H1 (cell line): ENCODE measurements at regions of chr9 and their contacts with region 1.

Region 1: DNA sequence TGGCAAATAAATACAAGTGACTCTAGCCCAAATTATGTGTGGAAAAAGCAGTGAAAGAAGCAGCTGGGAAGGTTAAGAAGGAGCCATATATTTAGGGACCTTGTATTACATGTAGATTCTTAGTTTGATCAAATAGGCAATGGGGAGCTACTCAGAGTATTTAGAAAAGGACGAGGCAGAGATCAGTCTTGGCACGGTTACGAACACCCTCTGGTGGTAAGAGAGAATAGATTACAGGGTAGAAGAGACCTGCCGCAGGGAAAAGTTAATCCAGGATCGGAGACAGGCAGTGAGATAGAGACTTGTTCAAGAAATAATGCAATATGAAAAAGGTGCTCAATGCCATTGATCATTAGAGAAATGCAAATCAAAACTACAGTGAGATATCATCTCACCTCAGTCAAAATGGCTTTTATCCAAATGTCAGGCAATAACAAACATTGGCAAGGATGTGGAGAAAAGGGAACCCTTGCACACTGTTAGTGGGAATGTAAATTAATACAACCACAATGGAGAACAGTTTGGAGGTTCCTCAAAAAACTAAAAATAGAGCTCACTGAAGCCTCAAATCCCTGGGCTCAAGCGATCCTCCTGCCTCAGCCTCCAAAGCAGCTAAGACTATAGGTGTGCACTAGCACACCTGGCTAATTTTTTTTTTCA is 12.0 kb downstream of the INIP start:
- DNase-seq: no peak
- H3K4me3 ChIP-seq: no peak overlapping the region
- H3K27ac ChIP-seq: no peak overlapping the region
- H3K4me1 ChIP-seq: no peaks in the 10 kb centered on the region
- H3K27me3 ChIP-seq: no peaks in the 10 kb centered on the region
- CTCF ChIP-seq: peak in 2 of 3 experiments; percentile 58 to 72; a peak in 3 of 4 replicates
- EP300 ChIP-seq: no peak
- POLR2A ChIP-seq: no peak
- RAD21 ChIP-seq: peak; percentile 81 to 89

Region 2: DNA sequence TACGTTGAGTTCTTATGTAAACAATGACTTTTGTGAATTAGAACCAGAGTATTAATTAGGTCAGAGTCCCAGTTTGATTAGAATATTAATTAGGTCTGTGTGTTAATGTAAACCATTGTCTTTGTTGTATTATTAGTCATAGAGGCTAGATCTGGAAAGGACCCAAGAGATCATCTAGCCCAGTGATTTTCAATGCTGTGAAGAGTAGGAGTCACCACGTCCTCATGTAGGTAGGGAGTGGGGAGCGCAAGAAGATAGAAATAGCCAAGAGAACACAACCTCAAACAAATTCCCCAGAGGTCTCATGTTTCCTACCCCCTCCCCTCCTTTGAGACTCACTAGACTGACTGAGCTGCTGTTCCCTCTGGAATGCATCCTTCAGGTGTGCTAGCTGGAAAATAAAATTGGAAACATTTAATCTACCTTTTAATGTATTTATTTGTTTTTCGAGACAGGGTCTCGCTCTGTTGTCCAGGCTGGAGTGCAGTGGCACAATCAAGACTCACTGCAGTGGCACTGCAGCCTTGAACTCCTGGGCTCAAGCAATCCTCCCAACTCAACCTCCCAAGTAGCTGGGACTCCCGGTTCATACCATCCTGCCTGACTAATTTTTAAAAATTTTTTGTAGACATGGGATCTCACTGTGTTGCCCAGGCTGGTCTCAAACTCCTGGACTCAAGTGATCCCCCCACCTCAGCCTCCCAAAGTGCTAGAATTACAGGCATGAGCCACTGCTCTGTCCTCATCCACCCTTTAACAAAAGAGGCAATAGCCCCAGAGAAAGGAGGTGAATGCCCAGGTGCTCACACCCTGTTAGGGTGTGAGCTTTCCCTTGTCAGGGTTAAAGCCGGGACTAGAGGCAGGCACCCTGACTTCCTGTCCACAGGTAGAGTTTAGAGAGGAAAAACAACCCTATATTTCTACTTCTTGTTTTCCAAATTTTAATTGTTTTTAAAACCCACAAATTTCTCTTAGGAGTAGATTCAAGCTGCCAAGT is 80.9 kb before region 1 on chr9:
- CTCF ChIA-PET with region 1: no interaction called
- POLR2A ChIA-PET with region 1: no interaction called
- DNase-seq: no peak
- H3K4me3 ChIP-seq: no peak overlapping the region
- H3K27ac ChIP-seq: no peak overlapping the region
- H3K4me1 ChIP-seq: peaks cover 0 to 3% (median 0%) of the 10 kb centered on the region in 4 experiments; a peak in 2 of 7 replicates
- H3K27me3 ChIP-seq: no peaks in the 10 kb centered on the region
- CTCF ChIP-seq: no peak
- EP300 ChIP-seq: no peak
- POLR2A ChIP-seq: no peak
- RAD21 ChIP-seq: no peak

Region 3: GRCh38 chr9:112694706-112695555 is 11.0 kb before region 1 on chr9:
- CTCF ChIA-PET with region 1: interaction called, 18 read pairs
- POLR2A ChIA-PET with region 1: no interaction called
- DNase-seq: no peak
- H3K4me3 ChIP-seq: no peak overlapping the region
- H3K27ac ChIP-seq: no peak overlapping the region
- H3K4me1 ChIP-seq: no peaks in the 10 kb centered on the region
- H3K27me3 ChIP-seq: no peaks in the 10 kb centered on the region
- CTCF ChIP-seq: no peak
- EP300 ChIP-seq: no peak
- POLR2A ChIP-seq: no peak
- RAD21 ChIP-seq: no peak

Region 4: DNA sequence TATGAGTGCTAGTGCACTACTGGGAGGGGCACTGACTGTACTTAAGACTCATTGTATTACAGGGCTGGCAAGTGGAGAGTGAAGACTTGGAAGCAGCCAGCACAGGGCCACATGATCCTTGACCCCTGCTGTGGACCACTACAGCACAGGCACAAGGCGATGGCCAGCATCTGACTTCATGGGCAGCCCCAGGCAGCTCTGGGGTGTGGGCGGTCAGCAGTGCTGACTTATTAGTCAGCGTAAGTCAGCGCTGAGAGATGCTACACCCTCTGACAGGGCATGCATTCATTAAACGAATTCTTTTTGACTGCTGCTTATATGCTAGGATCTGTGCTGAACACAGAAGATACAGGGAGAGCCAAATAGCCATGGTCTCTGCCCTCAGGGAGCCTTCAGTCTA is 175.5 kb after region 1 on chr9:
- CTCF ChIA-PET with region 1: no interaction called
- POLR2A ChIA-PET with region 1: no interaction called
- DNase-seq: no peak
- H3K4me3 ChIP-seq: no peak overlapping the region
- H3K27ac ChIP-seq: no peak overlapping the region
- H3K4me1 ChIP-seq: no peaks in the 10 kb centered on the region
- H3K27me3 ChIP-seq: no peaks in the 10 kb centered on the region
- CTCF ChIP-seq: no peak
- EP300 ChIP-seq: no peak
- POLR2A ChIP-seq: no peak
- RAD21 ChIP-seq: no peak